Mammary epithelial cell (primary cell): ENCODE measurements at regions of chr1 and their contacts with region 1.

Region 1: GRCh38 chr1:110449661-110450651 is 993 bp upstream of the PROK1 start:
- DNase-seq: no peak
- H3K4me3 ChIP-seq: no peak overlapping the region
- H3K27ac ChIP-seq: no peak overlapping the region
- H3K4me1 ChIP-seq: no peaks in the 10 kb centered on the region
- H3K27me3 ChIP-seq: peaks cover 6% of the 10 kb centered on the region
- CTCF ChIP-seq: no peak

Region 2: GRCh38 chr1:110420874-110421793 is 28.8 kb before region 1 on chr1:
- CTCF ChIA-PET with region 1: no interaction called
- dilution Hi-C with region 1: no loop called
- in situ Hi-C with region 1: loop called in 1 of 2 experiments (anchors 5 kb)
- intact Hi-C with region 1: no loop called
- DNase-seq: peak; percentile 64
- H3K4me3 ChIP-seq: no peak overlapping the region
- H3K27ac ChIP-seq: no peak overlapping the region
- H3K4me1 ChIP-seq: no peaks in the 10 kb centered on the region
- H3K27me3 ChIP-seq: no peaks in the 10 kb centered on the region
- CTCF ChIP-seq: no peak